OCI-LY7 (cell line): ENCODE measurements at regions of chr3 and their contacts with region 1.

Region 1: DNA sequence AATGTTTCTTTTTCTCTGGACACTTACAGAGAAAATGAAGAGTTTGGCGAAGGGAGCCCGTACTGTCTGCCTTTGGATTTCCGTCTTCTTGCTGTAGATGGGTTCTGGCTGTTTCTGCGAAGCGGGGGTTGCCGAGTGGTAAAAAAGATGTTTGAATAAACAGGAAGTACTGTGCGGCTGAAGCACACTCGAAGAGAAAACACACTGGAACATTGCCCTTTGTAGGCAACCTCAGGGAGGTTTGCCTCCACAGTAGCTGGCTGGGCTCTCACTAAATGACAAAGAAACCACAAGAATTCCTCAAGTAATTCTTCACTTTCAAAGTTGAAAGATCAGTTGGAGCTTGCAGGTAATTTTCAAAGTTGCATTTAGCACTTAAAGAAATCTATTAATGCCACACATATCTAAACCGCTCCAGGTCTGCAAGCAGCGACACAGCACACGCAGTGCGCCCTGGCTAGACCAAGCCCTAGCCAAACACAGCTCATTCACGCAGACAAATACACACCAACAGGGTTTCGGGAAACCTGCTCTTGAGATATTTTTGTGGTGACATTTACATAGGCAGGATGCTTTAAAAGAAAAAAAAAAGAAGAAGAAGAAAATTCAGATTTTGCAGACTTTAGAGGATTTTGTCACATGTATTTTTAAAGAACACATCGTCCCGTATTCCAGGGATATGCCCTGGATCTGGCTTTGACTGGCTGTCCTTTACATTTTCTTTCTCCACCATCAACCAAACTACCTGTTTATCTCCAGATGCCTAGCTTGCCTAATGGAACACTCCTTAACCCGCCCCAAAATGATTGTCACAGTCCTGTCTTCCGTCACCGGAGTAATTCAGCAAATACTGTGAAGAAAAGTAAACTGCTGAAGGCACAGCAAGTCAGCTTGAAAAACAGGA is 452.8 kb downstream of the FOXP1 start:
- DNase-seq: peak; percentile 84
- H3K4me3 ChIP-seq: peak overlapping the region; percentile 85
- H3K27ac ChIP-seq: peak overlapping the region; percentile 96
- H3K4me1 ChIP-seq: peaks cover 72% of the 10 kb centered on the region
- CTCF ChIP-seq: no peak

Region 2: DNA sequence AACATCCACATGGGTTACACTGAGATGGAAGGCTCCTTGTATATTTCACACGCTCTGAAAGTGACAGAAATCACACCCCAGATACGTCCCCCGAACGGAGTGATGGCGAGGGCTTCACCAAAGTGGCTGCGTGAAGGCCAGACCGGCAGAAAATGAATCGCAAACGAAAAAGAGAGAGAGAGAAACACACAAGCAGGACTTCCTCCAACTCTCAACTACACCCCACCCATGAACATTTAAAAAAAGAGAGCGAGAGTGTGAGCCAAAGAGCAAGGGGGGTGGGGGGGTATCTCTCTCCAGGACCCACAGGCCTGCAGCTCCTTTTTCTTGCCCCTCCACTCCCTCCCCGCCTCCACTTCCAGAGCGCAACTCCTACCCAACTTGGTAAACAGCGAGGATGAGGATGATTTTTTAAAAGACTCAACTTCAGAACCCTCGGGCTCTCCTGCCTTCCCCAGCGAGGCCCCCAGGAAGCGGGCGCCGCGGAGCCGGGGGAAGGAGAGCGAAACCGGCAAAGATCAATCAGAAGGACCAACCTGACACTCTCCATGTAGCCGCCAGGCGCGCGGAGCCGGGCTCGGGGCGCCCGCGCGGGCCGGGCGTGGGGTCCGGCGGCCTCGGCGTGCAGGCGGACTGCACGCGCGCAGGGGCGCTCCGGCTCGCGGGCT is 66.3 kb before region 1 on chr3:
- CTCF ChIA-PET with region 1: no interaction called
- POLR2A ChIA-PET with region 1: interaction called, 7 read pairs
- intact Hi-C with region 1: loop called (anchors 2 kb)
- DNase-seq: peak; percentile 57
- H3K4me3 ChIP-seq: peak overlapping the region; percentile 70
- H3K27ac ChIP-seq: peak overlapping the region; percentile 48
- H3K4me1 ChIP-seq: peaks cover 63% of the 10 kb centered on the region
- CTCF ChIP-seq: no peak

Region 3: GRCh38 chr3:71087143-71088018 is 43.3 kb before region 1 on chr3:
- CTCF ChIA-PET with region 1: no interaction called
- POLR2A ChIA-PET with region 1: interaction called, 12 read pairs
- intact Hi-C with region 1: loop called (anchors 1 kb)
- DNase-seq: peak; percentile 51
- H3K4me3 ChIP-seq: no peak overlapping the region
- H3K27ac ChIP-seq: peak overlapping the region; percentile 12
- H3K4me1 ChIP-seq: peaks cover 62% of the 10 kb centered on the region
- CTCF ChIP-seq: no peak

Region 4: DNA sequence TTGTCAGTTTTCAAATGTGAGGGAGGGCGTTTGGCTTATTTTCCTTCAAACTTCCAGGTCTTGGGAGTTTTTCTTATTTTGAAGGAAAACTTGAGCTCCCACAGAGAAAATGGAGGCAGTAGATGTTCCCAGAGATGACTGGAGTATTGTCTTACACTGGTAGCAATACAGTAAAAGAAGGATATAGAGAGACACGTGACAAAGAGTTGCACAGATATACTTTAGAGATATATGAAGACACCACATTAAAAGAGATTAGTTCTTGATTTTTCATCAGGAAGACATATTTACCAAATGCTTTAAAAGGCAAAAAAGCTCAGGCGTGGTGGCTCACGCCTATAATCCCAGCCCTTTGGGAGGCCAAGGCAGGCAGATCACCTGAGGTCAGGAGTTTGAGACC is 38.1 kb before region 1 on chr3:
- CTCF ChIA-PET with region 1: no interaction called
- POLR2A ChIA-PET with region 1: interaction called, 12 read pairs
- intact Hi-C with region 1: loop called (anchors 1 kb)
- DNase-seq: no peak
- H3K4me3 ChIP-seq: no peak overlapping the region
- H3K27ac ChIP-seq: no peak overlapping the region
- H3K4me1 ChIP-seq: peaks cover 50% of the 10 kb centered on the region
- CTCF ChIP-seq: no peak

Region 5: GRCh38 chr3:71444028-71444860 is 313.5 kb after region 1 on chr3:
- CTCF ChIA-PET with region 1: no interaction called
- POLR2A ChIA-PET with region 1: interaction called, 7 read pairs
- intact Hi-C with region 1: loop called (anchors 5 kb)
- DNase-seq: peak; percentile 94
- H3K4me3 ChIP-seq: peak overlapping the region; percentile 61
- H3K27ac ChIP-seq: peak overlapping the region; percentile 99
- H3K4me1 ChIP-seq: peaks cover 98% of the 10 kb centered on the region
- CTCF ChIP-seq: no peak

Region 6: GRCh38 chr3:71512000-71512399 is 381.3 kb after region 1 on chr3:
- CTCF ChIA-PET with region 1: no interaction called
- POLR2A ChIA-PET with region 1: interaction called, 3 read pairs
- intact Hi-C with region 1: loop called (anchors 5 kb)
- DNase-seq: peak; percentile 77
- H3K4me3 ChIP-seq: no peak overlapping the region
- H3K27ac ChIP-seq: peak overlapping the region; percentile 14
- H3K4me1 ChIP-seq: peaks cover 38% of the 10 kb centered on the region
- CTCF ChIP-seq: peak; percentile 83